MCF 10A (cell line): ENCODE measurements at regions of chr19 and their contacts with region 1.

Region 1: GRCh38 chr19:57320180-57321084 is at the start of gene ZNF543:
- DNase-seq: peak; percentile 98
- H3K4me3 Mint-ChIP-seq: peak within 1 kb of the TSS; percentile 81
- H3K27ac Mint-ChIP-seq: peak within 1 kb of the TSS; percentile 88
- H3K4me1 Mint-ChIP-seq: peaks cover 12% of the 10 kb centered on the region
- H3K27me3 Mint-ChIP-seq: peaks cover 4% of the 10 kb centered on the region
- CTCF ChIP-seq: no peak
- total RNA-seq, gene ZNF543: 9.2 and 10.8 TPM in 2 replicates

Region 2: DNA sequence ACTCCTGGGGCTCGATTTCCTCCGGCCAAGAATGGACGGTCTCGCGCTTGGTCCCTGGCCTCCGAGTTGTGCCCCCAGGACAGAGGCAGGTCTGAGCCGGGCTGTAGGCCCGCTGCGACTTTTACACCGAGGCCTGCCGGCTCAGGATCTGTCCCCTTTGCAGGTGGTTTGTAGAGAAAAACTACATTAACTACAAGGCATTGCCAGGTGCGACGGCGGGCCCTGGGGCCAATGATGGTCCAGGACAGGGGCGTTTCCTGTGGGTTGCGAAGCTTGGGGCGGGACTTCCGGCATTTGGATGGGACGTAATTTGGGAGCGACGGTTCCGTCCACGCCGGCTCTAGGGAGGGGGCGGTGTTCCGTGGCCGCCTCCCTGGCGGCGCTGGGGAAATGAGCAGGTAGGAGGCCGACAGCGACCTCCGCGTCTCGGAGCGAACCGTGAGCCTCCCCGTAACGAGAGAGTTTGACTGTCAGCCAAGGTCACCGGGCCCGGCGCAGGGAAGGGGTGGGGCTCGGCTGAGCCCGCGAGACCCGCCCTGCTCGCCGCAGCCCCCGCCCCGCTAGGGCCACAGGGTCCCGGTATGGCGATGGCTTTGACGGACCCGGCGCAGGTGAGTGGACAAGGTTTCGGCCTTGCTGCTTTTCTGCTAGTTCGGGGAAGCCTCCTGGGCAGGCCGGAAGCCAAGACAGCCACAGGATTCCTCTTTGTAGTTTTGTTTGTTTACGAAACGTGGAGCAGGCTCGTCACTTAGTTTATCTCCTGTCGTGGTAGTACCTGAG is 79.9 kb before region 1 on chr19 and contains the start of gene ZNF805:
- CTCF ChIA-PET with region 1: no interaction called
- POLR2A ChIA-PET with region 1: interaction called, 3 read pairs
- intact Hi-C with region 1: loop called (anchors 2 kb)
- DNase-seq: peak; percentile 95
- H3K4me3 Mint-ChIP-seq: peak within 1 kb of the TSS; percentile 73
- H3K27ac Mint-ChIP-seq: peak within 1 kb of the TSS; percentile 70
- H3K4me1 Mint-ChIP-seq: peaks cover 6% of the 10 kb centered on the region
- H3K27me3 Mint-ChIP-seq: no peaks in the 10 kb centered on the region
- CTCF ChIP-seq: no peak
- total RNA-seq, gene ZNF805: 11.8 and 12.2 TPM in 2 replicates

Region 3: GRCh38 chr19:57279418-57280066 is 40.9 kb before region 1 on chr19:
- CTCF ChIA-PET with region 1: interaction called, 4 read pairs
- POLR2A ChIA-PET with region 1: interaction called, 3 read pairs
- intact Hi-C with region 1: loop called (anchors 1 kb)
- DNase-seq: peak; percentile 99
- H3K4me3 Mint-ChIP-seq: no peak overlapping the region
- H3K27ac Mint-ChIP-seq: no peak overlapping the region
- H3K4me1 Mint-ChIP-seq: peaks cover 12% of the 10 kb centered on the region
- H3K27me3 Mint-ChIP-seq: no peaks in the 10 kb centered on the region
- CTCF ChIP-seq: no peak

Region 4: GRCh38 chr19:57334191-57334590 is 13.8 kb after region 1 on chr19:
- CTCF ChIA-PET with region 1: interaction called, 3 read pairs
- POLR2A ChIA-PET with region 1: interaction called, 41 read pairs
- intact Hi-C with region 1: no loop called
- DNase-seq: peak; percentile 80
- H3K4me3 Mint-ChIP-seq: no peak overlapping the region
- H3K27ac Mint-ChIP-seq: peak overlapping the region; percentile 50
- H3K4me1 Mint-ChIP-seq: peaks cover 8% of the 10 kb centered on the region
- H3K27me3 Mint-ChIP-seq: no peaks in the 10 kb centered on the region
- CTCF ChIP-seq: no peak

Region 5: GRCh38 chr19:57350877-57351805 is 30.7 kb after region 1 on chr19 and contains the start of gene ZNF304:
- CTCF ChIA-PET with region 1: interaction called, 3 read pairs
- POLR2A ChIA-PET with region 1: interaction called, 16 read pairs
- intact Hi-C with region 1: no loop called
- DNase-seq: peak; percentile 98
- H3K4me3 Mint-ChIP-seq: peak within 1 kb of the TSS; percentile 90
- H3K27ac Mint-ChIP-seq: peak within 1 kb of the TSS; percentile 97
- H3K4me1 Mint-ChIP-seq: peaks cover 21% of the 10 kb centered on the region
- H3K27me3 Mint-ChIP-seq: no peaks in the 10 kb centered on the region
- CTCF ChIP-seq: no peak
- total RNA-seq, gene ZNF304: 7.0 and 9.9 TPM in 2 replicates

Region 6: DNA sequence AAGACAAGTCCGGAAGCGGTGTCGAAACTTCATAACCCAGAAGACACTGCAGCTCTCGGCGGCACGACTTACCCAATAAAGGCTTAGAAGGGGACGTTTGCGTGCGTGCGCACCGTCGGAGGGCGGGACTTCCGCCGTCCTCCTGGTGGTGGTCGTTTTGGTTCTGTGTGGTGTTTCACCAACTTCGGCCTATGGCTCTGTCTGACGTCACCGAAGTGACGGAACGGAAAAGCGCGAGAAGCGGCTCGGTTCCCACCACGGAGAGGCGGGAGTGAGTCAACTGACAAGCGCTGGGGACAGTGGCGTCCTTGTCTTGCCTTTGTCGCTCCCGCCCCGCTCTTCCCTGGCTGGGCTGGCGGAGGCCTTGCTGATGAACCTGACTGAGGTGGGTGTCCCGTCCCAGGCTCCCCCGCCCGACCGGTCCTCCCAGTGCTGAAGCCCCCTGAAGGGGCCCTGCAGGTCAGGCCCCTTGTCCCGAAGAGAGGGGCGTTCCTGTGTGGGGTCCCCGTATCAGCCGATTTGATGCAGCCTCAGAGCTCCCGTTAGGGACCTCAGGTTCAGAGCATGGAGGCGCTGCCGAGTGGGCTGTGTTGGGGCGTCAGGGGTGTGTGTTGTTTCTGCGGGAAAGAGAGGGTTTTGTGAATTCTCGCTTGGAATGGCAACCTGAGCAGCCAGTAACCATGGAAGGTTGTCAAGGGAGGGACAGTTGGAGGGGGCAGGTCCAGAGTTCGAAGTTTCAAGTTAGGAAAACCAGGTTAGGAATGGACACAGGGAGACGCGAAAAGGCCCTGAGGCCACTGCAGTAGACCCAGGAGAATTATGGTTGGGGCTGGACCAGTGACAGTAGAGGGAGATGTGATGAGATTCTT is 69.5 kb after region 1 on chr19 and contains the start of gene ZNF548:
- CTCF ChIA-PET with region 1: interaction called, 3 read pairs
- POLR2A ChIA-PET with region 1: interaction called, 10 read pairs
- intact Hi-C with region 1: no loop called
- DNase-seq: peak; percentile 97
- H3K4me3 Mint-ChIP-seq: peak within 1 kb of the TSS; percentile 88
- H3K27ac Mint-ChIP-seq: peak within 1 kb of the TSS; percentile 97
- H3K4me1 Mint-ChIP-seq: peaks cover 13% of the 10 kb centered on the region
- H3K27me3 Mint-ChIP-seq: no peaks in the 10 kb centered on the region
- CTCF ChIP-seq: no peak
- total RNA-seq, gene ZNF548: 23.7 and 40.1 TPM in 2 replicates

Region 7: DNA sequence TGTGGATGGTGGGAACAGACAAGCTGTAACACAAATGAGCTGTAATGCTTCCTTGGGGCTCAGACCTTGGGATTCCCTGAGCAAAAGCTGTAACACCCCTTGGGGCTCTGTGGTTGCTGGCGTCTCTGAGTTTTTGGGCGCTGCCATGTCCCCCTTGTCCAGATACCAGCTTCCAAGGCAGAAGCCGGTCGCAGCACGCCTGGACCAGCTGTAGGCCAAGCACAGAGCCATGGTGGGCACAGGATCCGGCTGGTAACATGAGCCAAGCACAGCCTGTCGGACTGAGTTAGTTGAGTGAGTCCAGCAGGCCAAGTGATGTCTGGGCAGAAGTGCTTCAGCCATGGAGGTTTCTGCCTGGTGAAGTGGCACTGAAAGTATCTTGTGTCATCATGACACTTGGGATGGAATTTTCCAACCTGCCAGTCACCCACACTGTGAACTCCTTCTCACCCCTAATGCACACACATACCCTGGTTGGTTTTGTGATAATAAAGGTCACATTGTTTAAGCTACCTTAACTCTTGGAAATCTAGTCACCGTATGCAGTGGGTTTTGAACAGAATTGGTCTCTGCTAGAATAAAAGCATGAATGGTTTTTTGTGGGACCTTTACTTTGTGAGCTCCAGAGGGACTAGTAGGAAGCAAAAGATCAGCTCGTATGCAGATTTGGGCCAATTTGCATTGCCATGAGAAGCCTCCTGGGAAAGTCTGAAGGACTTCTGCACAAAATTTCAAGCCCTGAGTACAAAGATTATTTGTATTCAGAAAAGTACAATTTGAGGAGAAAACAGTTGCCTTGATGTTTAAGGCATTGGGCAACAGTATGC is 83.5 kb after region 1 on chr19:
- CTCF ChIA-PET with region 1: no interaction called
- POLR2A ChIA-PET with region 1: no interaction called
- intact Hi-C with region 1: no loop called
- DNase-seq: no peak
- H3K4me3 Mint-ChIP-seq: no peak overlapping the region
- H3K27ac Mint-ChIP-seq: no peak overlapping the region
- H3K4me1 Mint-ChIP-seq: peaks cover 6% of the 10 kb centered on the region
- H3K27me3 Mint-ChIP-seq: no peaks in the 10 kb centered on the region
- CTCF ChIP-seq: no peak

Region 8: DNA sequence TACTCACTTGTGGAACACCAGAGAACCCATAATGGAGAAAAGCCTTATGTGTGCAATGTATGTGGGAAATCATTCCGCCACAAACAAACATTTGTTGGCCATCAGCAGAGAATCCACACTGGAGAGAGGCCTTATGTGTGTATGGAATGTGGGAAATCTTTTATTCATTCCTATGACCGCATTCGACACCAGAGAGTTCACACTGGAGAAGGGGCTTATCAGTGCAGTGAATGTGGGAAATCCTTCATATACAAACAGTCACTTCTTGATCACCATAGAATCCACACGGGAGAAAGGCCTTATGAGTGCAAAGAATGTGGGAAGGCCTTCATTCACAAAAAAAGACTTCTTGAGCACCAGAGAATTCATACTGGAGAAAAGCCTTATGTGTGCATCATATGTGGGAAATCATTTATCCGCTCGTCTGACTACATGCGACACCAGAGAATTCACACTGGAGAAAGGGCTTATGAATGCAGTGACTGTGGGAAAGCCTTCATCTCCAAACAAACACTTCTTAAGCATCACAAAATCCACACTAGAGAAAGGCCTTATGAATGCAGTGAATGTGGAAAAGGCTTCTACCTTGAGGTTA is 217.6 kb after region 1 on chr19:
- CTCF ChIA-PET with region 1: no interaction called
- POLR2A ChIA-PET with region 1: no interaction called
- intact Hi-C with region 1: no loop called
- DNase-seq: no peak
- H3K4me3 Mint-ChIP-seq: no peak overlapping the region
- H3K27ac Mint-ChIP-seq: no peak overlapping the region
- H3K4me1 Mint-ChIP-seq: no peaks in the 10 kb centered on the region
- H3K27me3 Mint-ChIP-seq: no peaks in the 10 kb centered on the region
- CTCF ChIP-seq: no peak